Mammary epithelial cell (primary cell): ENCODE measurements at regions of chr20 and their contacts with region 1.

Region 1: GRCh38 chr20:62276439-62276838 is 26.4 kb upstream of the ADRM1 start:
- DNase-seq: no peak
- H3K4me3 ChIP-seq: no peak overlapping the region
- H3K27ac ChIP-seq: no peak overlapping the region
- H3K4me1 ChIP-seq: no peaks in the 10 kb centered on the region
- H3K27me3 ChIP-seq: no peaks in the 10 kb centered on the region
- CTCF ChIP-seq: no peak

Region 2: GRCh38 chr20:61991476-61991875 is 285.0 kb before region 1 on chr20:
- CTCF ChIA-PET with region 1: no interaction called
- dilution Hi-C with region 1: no loop called
- in situ Hi-C with region 1: no loop called
- intact Hi-C with region 1: no loop called
- DNase-seq: no peak
- H3K4me3 ChIP-seq: no peak overlapping the region
- H3K27ac ChIP-seq: no peak overlapping the region
- H3K4me1 ChIP-seq: no peaks in the 10 kb centered on the region
- H3K27me3 ChIP-seq: no peaks in the 10 kb centered on the region
- CTCF ChIP-seq: no peak

Region 3: GRCh38 chr20:62010551-62011402 is 265.7 kb before region 1 on chr20:
- CTCF ChIA-PET with region 1: no interaction called
- dilution Hi-C with region 1: loop called (anchors 25 kb)
- in situ Hi-C with region 1: no loop called
- intact Hi-C with region 1: no loop called
- DNase-seq: peak; percentile 10
- H3K4me3 ChIP-seq: no peak overlapping the region
- H3K27ac ChIP-seq: no peak overlapping the region
- H3K4me1 ChIP-seq: peaks cover 3% of the 10 kb centered on the region
- H3K27me3 ChIP-seq: no peaks in the 10 kb centered on the region
- CTCF ChIP-seq: peak; percentile 35 to 69

Region 4: GRCh38 chr20:62201173-62202082 is 75.0 kb before region 1 on chr20:
- CTCF ChIA-PET with region 1: no interaction called
- dilution Hi-C with region 1: loop called (anchors 5 kb)
- in situ Hi-C with region 1: no loop called
- intact Hi-C with region 1: no loop called
- DNase-seq: no peak
- H3K4me3 ChIP-seq: no peak overlapping the region
- H3K27ac ChIP-seq: no peak overlapping the region
- H3K4me1 ChIP-seq: no peaks in the 10 kb centered on the region
- H3K27me3 ChIP-seq: no peaks in the 10 kb centered on the region
- CTCF ChIP-seq: no peak

Region 5: GRCh38 chr20:62327726-62328495 is 51.5 kb after region 1 on chr20:
- CTCF ChIA-PET with region 1: no interaction called
- dilution Hi-C with region 1: loop called (anchors 5 kb)
- in situ Hi-C with region 1: no loop called
- intact Hi-C with region 1: no loop called
- DNase-seq: no peak
- H3K4me3 ChIP-seq: no peak overlapping the region
- H3K27ac ChIP-seq: no peak overlapping the region
- H3K4me1 ChIP-seq: no peaks in the 10 kb centered on the region
- H3K27me3 ChIP-seq: no peaks in the 10 kb centered on the region
- CTCF ChIP-seq: no peak

Region 6: DNA sequence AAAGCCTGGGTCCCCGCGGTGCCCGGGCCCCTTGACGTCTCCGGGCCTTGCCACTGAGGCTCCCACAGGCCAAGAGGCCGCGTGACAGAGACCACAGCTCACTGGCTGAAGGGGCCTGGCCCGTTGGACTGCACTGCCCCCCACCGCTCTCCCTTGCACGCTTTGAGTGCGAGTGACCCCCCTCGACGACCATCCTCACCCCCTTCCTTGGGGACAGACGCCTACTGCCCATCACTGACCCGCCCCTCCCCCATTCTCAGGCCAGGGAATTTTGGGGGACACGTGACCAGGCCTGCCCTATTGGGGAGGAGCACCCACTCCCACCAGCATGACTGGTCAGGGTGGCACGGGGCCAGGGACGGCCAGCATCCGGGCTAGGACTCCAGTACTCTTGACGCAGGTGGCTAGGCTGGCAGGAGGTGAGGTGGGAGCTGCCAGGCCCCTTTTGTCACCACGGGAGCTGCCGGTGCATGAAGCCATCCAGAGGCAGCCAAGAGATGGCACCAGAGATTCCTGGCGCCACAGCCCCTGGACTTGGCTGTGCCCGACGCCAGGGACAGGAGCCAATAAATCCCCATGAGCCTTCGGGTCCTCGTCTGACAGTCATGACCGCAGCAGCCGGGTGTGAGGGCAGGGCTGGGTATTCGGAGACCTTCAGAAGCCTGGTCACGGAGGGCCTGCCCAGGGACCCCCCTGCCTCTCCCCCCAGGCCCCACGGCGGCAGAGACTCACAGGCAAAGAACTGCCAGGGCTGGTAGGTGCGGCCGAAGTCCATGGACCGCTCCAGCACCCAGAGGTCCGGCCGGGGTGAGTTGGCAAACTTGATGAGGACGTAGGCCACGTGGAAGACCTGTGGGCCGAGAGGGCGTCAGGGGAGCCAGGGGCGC is 76.2 kb after region 1 on chr20:
- CTCF ChIA-PET with region 1: no interaction called
- dilution Hi-C with region 1: no loop called
- in situ Hi-C with region 1: no loop called
- intact Hi-C with region 1: no loop called
- DNase-seq: peak; percentile 69
- H3K4me3 ChIP-seq: no peak overlapping the region
- H3K27ac ChIP-seq: no peak overlapping the region
- H3K4me1 ChIP-seq: peaks cover 75% of the 10 kb centered on the region
- H3K27me3 ChIP-seq: no peaks in the 10 kb centered on the region
- CTCF ChIP-seq: peak in 1 of 2 donors; percentile 55

Region 7: GRCh38 chr20:62561182-62561581 is 284.7 kb after region 1 on chr20:
- CTCF ChIA-PET with region 1: no interaction called
- dilution Hi-C with region 1: no loop called
- in situ Hi-C with region 1: no loop called
- intact Hi-C with region 1: no loop called
- DNase-seq: no peak
- H3K4me3 ChIP-seq: no peak overlapping the region
- H3K27ac ChIP-seq: no peak overlapping the region
- H3K4me1 ChIP-seq: no peaks in the 10 kb centered on the region
- H3K27me3 ChIP-seq: peaks cover 23% of the 10 kb centered on the region
- CTCF ChIP-seq: no peak

Region 8: GRCh38 chr20:62623488-62624324 is 347.3 kb after region 1 on chr20:
- CTCF ChIA-PET with region 1: no interaction called
- dilution Hi-C with region 1: loop called (anchors 5 kb)
- in situ Hi-C with region 1: no loop called
- intact Hi-C with region 1: no loop called
- DNase-seq: peak; percentile 91
- H3K4me3 ChIP-seq: no peak overlapping the region
- H3K27ac ChIP-seq: peak overlapping the region; percentile 87
- H3K4me1 ChIP-seq: peaks cover 22% of the 10 kb centered on the region
- H3K27me3 ChIP-seq: no peaks in the 10 kb centered on the region
- CTCF ChIP-seq: peak in 1 of 2 donors; percentile 9